RWPE1 (cell line): ENCODE measurements at regions of chr9 and their contacts with region 1.

Region 1: GRCh38 chr9:129382281-129383018 is 204.4 kb upstream of the IER5L start:
- DNase-seq: no peak
- H3K27ac ChIP-seq: peak overlapping the region; percentile 82
- CTCF ChIP-seq: no peak

Region 2: DNA sequence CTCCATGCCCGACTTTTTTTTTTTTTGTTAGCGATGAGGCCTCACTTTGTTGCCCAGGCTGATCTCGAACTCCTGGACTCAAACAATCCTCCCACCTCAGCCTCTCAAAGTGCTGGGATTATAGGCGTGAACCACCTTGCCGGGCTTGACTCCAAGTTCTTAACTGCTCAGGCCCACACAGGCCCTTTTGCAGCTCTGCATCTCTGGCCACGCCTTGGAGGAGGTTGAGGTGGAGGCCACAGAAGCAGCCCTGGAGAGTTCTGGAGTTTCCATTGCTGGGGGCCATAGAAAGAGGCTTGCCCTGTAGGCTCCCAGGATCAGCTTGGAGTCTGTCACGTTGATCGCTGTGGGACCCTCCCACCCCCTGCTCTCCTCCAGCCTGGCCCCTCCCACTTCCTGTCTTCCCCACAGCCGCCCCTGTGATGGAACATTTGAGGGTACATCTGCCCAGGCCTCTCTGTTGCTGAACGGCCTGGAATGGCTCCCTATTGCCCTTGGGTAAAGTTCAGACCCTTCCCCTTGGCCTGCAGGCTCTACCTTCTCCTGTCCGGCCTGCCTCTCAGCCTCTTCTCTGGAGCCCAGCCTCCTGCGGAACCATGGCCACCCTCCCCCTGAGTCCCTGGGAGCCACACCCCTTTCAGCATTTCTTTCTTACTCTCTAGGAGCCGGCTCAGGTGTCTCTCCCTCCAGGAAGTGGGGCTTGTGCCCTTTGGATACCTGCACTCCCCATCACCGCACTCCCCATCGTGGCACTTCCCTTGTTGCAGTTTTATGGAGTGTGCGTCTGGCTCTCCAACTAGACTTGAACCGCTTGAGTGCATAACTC is 174.0 kb before region 1 on chr9:
- CTCF ChIA-PET with region 1: no interaction called
- POLR2A ChIA-PET with region 1: interaction called, 11 read pairs
- DNase-seq: no peak
- H3K27ac ChIP-seq: peak overlapping the region; percentile 15; the same call in 1 of the 2 replicates
- CTCF ChIP-seq: no peak

Region 3: DNA sequence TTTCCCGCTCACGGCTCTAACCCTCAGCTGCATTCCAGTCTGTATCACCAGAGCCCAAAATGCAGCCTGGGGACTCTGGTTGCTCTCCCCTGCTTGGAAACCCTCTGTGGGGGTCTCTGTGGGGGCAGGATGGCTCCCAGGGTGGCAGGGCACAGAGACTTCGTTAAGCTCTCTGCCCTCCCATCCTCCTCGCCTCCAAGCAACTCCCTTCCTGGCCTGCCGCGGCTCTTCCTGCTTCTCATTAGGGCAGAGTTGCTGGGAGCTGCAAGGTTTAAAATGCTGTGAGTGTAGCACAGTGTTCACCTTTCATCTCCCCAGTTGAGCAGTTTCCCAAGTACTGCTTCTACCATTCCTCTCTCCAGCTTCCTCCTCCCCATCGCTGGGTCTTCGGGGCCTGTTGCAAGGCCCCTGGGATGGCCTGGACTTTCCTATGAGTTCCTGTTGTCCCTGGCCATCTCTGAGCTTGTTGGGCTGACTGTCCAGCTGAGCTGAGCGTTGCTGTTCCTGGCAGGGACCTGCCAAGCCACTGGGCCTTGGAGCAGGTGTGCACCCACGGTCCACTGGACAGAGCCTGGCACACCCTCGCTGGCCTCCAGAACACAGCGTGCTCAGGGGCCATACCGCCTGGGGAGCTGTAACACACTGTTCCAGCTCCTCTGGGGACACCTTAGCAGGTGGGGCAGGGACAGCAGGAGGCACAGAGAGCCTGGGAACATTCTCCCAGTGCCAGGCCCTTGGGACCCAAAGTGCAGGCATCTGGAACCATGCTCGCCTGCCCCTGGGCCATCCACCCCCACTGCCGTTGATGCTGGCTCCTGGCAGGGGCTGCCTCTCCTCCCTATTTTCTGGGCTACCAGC is 50.1 kb after region 1 on chr9:
- CTCF ChIA-PET with region 1: no interaction called
- POLR2A ChIA-PET with region 1: interaction called, 10 read pairs
- DNase-seq: no peak
- H3K27ac ChIP-seq: no peak overlapping the region
- CTCF ChIP-seq: no peak

Region 4: GRCh38 chr9:129602598-129603415 is 220.4 kb after region 1 on chr9:
- CTCF ChIA-PET with region 1: no interaction called
- POLR2A ChIA-PET with region 1: no interaction called
- DNase-seq: no peak
- H3K27ac ChIP-seq: no peak overlapping the region
- CTCF ChIP-seq: no peak